ENCODE measurements at regions of chr22 and their contacts with region 1.

Region 1: DNA sequence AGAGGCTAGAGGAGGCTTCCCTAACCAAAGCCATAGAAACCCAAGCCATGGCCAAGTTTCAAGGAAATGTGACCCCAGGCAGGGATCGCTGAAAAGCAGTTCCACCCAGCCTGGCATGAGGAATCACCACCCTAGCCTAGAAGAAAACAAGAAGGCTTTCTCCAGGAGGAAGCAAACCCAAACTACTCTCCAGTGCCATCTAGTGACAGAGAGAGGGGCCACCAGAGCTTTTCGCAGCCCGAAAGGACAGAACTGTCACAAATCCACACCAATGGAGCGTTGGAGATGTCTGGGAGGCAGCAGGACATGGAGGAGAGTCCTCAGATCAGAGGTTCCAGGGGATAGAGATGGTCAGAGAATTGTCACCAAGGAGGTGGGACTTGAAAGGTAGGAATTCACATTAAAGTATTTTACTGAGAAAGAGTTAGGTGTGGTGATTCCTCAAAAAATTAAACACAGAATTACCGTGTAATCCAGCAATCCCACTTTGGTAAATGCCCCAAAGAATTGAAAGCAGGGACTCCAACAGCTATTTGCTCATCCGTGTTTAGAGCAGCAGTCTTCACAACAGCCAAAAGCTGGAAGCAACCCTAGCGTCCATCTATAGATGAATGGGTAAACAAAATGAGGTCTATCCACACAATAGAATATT is 67.3 kb upstream of the NUP50 start:
- DNase-seq: peak; percentile 61
- H3K4me3 ChIP-seq: no peak overlapping the region
- H3K27ac ChIP-seq: no peak overlapping the region
- H3K4me1 ChIP-seq: no peaks in the 10 kb centered on the region
- CTCF ChIP-seq: peak; percentile 90

Region 2: DNA sequence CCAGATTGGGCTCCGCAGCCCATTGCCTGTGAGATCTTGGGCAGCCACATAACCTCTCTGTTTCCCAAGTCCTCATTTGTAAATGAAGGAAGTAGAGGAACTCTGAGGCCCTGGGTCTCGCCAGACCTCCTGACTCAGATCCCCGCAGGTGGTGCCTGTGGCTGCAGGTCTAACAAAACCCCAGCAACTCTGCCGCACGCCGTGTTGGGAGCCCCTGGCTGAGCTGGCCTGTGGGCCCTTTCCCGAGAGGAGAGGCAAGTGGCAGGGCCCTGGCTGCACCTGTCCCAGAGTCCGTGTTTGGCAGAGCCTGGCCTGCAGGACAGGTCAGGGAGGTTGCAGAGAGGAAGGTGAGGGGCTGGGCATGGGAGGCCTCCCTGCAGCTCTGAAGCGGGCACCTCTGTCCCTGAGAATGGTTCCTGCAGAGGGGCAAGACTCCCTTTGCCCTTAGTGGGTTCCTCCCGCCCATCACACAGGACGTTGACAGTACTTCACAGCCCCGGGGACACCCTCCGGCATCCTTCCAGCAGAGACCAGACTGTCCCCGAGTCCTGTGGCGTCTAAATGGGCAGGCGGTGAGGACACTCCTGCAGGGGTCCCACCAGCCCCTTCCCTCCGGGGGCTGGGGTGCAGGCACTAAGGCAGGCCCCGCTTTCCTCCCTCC is 276.3 kb before region 1 on chr22:
- CTCF ChIA-PET with region 1: no interaction called
- POLR2A ChIA-PET with region 1: no interaction called
- intact Hi-C with region 1: loop called (anchors 2 kb)
- DNase-seq: no peak
- H3K4me3 ChIP-seq: no peak overlapping the region
- H3K27ac ChIP-seq: no peak overlapping the region
- H3K4me1 ChIP-seq: no peaks in the 10 kb centered on the region
- CTCF ChIP-seq: no peak

Region 3: DNA sequence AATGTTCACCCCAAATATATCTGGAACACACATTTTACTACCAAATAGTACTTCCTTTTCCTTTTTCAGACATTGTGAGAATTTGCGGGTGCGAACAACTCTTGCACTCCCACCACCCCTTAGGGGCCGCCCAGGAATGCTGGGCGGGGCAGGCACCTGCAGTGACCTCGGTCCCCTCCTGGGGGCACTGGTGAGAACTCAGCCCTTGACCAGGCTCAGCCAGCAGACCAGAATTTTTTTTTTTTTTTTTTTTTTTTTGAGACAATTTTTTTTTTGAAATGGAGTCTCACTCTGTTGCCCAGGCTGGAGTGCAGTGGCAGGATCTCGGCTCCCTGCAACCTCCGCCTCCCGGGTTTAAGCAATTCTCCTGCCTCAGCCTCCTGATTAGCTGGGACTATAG is 268.2 kb before region 1 on chr22:
- CTCF ChIA-PET with region 1: no interaction called
- POLR2A ChIA-PET with region 1: no interaction called
- intact Hi-C with region 1: loop called (anchors 1 kb)
- DNase-seq: peak; percentile 22
- H3K4me3 ChIP-seq: no peak overlapping the region
- H3K27ac ChIP-seq: no peak overlapping the region
- H3K4me1 ChIP-seq: no peaks in the 10 kb centered on the region
- CTCF ChIP-seq: peak; percentile 73

Region 4: DNA sequence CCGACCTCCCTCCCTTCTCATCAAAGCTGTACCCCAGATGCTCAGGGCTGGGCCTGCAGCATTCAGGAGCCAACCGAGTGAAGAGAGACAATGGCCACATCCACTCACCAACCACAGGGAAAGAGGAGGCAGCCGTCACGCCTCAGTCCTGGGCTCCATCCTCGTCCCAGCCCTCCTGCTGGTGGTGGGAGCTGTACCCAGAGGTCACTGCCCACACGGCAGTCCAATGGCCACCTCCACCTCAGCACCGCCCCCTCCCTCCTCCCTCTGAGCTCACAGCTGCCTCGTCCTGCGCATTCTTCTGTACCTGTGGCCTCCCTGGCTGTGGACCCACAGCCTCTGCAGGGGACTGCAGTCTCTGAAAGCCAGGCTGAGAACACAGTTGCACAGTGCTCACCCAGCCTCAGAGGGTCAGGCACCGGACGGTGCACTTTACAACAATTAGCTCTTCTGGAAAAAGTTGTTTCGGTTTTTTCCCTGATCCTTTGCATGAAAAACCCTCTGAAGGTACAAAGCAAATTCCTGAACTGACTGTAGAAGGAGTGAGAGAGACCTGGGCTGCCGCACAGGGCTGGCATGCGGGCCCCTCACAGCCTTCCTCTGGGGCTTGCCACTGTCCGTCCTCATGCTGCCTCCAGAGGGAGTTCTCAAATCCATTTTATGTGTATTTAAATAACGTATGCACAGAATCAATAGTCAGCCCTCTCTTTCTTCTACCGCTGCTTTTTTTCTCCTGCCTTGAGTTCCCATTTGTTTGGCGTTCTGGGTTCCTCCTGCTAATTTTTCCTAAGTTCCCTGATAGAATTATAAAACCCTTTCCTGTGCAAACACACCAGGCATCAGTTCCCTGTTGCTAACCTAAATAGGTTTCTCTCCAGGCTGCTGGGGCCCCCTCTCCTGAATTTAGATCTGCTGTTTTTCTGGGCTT is 139.3 kb before region 1 on chr22:
- CTCF ChIA-PET with region 1: no interaction called
- POLR2A ChIA-PET with region 1: no interaction called
- intact Hi-C with region 1: no loop called
- DNase-seq: no peak
- H3K4me3 ChIP-seq: no peak overlapping the region
- H3K27ac ChIP-seq: no peak overlapping the region
- H3K4me1 ChIP-seq: peaks cover 13% of the 10 kb centered on the region
- CTCF ChIP-seq: 0 out of 2 replicates have a peak, but pooled peaks have one; percentile 40

Region 5: DNA sequence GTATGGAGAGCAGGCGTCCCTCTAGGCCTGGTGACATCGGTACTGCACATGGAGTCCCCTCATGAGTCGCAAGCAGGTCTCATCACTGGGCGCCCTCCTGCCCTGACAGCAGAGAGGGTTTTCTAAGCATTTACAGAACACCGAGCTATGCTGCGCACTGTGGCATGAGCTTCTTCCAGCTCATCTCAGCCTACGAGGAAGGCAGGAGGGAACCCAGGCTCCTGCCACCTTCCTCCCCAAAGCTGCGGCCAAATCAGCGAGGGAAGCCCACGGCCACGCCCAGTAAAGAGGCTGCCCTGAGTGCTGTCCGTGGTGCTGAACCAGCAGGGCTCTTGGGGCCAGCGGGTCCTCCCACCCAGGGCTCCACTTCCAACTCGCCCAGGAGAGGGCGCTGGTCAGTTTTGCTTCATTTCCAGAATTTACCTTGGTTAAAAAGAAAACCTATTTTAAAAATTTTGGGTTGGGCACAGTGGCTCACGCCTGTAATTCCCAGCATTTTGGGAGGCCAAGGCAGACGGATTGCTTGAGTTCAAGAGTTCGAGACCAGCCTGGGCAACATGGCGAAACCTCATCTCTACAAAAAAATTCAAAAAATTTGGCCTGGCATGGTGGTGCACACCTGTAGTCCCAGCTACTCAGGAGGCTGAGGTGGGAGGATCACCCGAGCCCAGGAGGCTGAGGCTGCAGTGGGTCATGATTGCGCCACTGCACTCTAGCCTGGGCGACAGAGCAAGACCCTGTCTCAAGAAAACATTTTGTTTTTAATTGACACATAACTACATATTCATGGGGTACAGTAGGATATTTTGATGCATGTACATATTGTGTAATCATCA is 120.7 kb before region 1 on chr22:
- CTCF ChIA-PET with region 1: no interaction called
- POLR2A ChIA-PET with region 1: no interaction called
- intact Hi-C with region 1: loop called (anchors 1 kb)
- DNase-seq: peak; percentile 78
- H3K4me3 ChIP-seq: no peak overlapping the region
- H3K27ac ChIP-seq: no peak overlapping the region
- H3K4me1 ChIP-seq: no peaks in the 10 kb centered on the region
- CTCF ChIP-seq: peak; percentile 77

Region 6: GRCh38 chr22:45201678-45202332 is 105.4 kb after region 1 on chr22:
- CTCF ChIA-PET with region 1: no interaction called
- POLR2A ChIA-PET with region 1: no interaction called
- intact Hi-C with region 1: no loop called
- DNase-seq: no peak
- H3K4me3 ChIP-seq: no peak overlapping the region
- H3K27ac ChIP-seq: no peak overlapping the region
- H3K4me1 ChIP-seq: no peaks in the 10 kb centered on the region
- CTCF ChIP-seq: no peak